CD14-positive monocyte (primary cell): ENCODE measurements at regions of chr1 and their contacts with region 1.

Region 1: DNA sequence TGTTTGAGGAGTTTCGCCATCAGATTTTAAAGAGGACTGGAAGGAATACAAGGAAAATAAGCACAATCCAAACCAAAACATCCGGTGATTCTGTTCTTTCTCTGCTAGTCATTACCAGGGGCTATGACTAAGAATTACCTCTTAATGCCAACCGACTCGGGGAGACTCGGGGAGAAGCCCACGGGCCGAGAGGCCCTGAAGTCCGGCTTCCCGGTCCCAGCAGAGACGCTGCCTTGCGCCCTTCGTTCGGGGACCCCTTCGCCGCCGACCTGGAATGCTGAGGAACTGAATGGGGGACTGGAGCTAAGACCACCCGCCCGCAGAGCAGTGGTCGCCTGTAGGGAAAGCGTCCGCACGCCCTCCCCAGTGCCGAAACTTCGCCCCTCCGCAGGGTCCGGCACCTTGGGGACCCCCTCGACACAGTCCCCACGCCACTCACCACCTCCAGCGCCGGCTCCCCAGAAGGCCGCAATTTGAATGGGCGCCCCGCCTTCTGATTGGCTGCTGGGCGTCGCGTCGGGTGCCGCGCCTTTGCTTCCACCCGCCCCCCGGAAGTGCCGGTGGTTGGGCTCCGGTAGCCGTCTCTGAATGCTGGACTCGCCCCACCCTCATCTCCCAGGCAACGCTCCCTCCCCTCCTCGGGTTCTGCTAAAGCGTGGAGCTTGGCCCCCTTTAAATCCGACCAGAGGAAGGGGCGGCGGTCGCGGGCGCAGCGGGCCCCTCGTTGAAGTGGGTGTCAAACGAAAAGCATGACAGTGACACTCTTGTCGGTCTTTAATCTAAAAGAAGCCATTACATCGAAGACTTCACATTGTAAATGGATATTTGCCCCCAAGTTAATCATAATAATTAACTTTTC is at the start of gene KIF14:
- DNase-seq: peak; percentile 90 to 93 (median 90)
- H3K4me3 ChIP-seq: peak within 1 kb of the TSS; percentile 81 to 97 (median 87)
- H3K4me3 Mint-ChIP-seq: peak within 1 kb of the TSS; percentile 87 to 93
- H3K27ac ChIP-seq: peak within 1 kb of the TSS; percentile 85 to 96
- H3K27ac Mint-ChIP-seq: peak within 1 kb of the TSS; percentile 95 to 98 (median 98)
- H3K4me1 ChIP-seq: peaks cover 19 to 21% of the 10 kb centered on the region in 2 donors
- H3K4me1 Mint-ChIP-seq: peaks cover 20% of the 10 kb centered on the region
- H3K27me3 ChIP-seq: no peaks in the 10 kb centered on the region
- H3K27me3 Mint-ChIP-seq: no peaks in the 10 kb centered on the region
- CTCF ChIP-seq: no peak
- polyA plus RNA-seq, gene KIF14: 0.03 to 0.18 (median 0.05) TPM

Region 2: DNA sequence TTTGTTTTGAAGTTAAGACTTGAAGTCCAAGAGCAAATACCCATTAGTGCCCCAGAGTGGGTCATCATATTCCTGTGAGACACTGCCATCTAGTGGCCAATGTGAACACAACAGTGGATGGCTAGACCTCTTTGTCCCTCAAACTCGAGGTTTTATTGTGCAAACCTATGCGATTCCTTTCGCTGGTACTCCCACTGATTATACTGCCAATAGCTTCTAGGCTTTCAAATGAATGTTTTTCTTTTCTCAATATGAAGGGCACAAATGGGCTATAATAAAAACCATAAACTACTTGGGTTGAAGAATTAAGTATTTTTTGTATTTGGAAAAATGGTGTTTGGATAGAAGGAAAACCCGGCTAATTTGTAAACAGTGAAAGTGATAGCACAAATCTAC is 110.3 kb before region 1 on chr1:
- intact Hi-C with region 1: no loop called
- DNase-seq: peak; percentile 58 to 78 (median 69)
- H3K4me3 ChIP-seq: no peak overlapping the region
- H3K4me3 Mint-ChIP-seq: no peak overlapping the region
- H3K27ac ChIP-seq: no peak overlapping the region
- H3K27ac Mint-ChIP-seq: no peak overlapping the region
- H3K4me1 ChIP-seq: no peaks in the 10 kb centered on the region
- H3K4me1 Mint-ChIP-seq: no peaks in the 10 kb centered on the region
- H3K27me3 ChIP-seq: no peaks in the 10 kb centered on the region
- H3K27me3 Mint-ChIP-seq: peaks cover 3 to 8% (median 6%) of the 10 kb centered on the region in 3 donors
- CTCF ChIP-seq: peak; percentile 96

Region 3: GRCh38 chr1:200639790-200640669 is 19.5 kb after region 1 on chr1:
- intact Hi-C with region 1: no loop called
- DNase-seq: peak; percentile 92 to 99 (median 98)
- H3K4me3 ChIP-seq: peak overlapping the region in 2 of 3 experiments; percentile 44 to 61
- H3K4me3 Mint-ChIP-seq: peak overlapping the region; percentile 1 to 72
- H3K27ac ChIP-seq: peak overlapping the region in 1 of 2 donors; percentile 87
- H3K27ac Mint-ChIP-seq: peak overlapping the region; percentile 91 to 98 (median 95)
- H3K4me1 ChIP-seq: peaks cover 37 to 42% of the 10 kb centered on the region in 2 donors
- H3K4me1 Mint-ChIP-seq: peaks cover 34% of the 10 kb centered on the region
- H3K27me3 ChIP-seq: no peaks in the 10 kb centered on the region
- H3K27me3 Mint-ChIP-seq: peaks cover 0 to 2% (median 2%) of the 10 kb centered on the region in 3 donors
- CTCF ChIP-seq: no peak

Region 4: DNA sequence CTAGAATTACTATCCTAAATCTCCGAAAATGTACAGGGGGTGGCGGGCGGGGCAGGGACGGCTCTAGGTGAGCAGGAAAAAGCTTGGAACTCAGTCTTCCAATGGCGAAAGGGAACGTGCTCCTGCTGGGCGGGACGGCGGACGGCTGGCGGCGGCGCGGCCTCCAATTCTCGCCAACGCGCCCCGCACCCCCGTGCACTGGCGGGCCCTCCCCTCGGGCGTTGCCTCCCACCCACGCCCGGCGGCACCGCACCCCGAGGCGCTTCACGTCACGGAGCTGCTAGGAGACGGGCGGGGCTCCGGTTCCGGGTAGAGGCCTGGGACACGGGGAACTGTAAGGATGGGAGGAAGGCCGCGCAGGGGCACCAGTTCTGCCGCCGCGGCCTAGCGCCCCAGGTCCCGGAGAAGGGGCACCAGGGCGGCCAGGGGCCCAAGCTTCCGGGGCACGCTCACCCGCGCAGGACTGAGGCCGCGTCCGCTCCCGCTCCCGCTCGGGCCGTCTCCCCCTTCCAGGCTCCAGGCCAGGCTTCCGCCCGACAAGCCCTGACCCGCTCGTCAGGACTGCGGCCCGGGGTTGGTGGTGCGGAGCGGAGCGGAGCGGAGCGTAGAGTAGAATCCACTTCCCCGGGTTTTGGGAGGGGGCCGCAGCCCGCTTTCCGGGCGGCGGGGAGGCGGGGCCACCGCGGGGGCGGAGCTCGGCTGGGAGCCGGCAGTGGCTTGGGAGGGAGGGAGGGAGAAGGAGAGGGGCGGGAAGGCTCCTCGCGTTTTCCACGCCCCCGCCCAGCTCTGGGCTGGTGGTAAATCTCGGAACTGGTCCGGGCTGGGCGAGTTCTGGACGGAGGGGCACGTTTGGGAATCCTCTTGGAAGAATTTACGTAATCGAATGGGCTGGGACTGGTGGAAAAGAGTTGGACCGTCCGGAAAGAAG is 49.1 kb after region 1 on chr1 and contains the start of gene DDX59:
- intact Hi-C with region 1: loop called (anchors 2 to 5 kb)
- DNase-seq: peak; percentile 86 to 93 (median 88)
- H3K4me3 ChIP-seq: peak within 1 kb of the TSS; percentile 67 to 90 (median 71)
- H3K4me3 Mint-ChIP-seq: peak within 1 kb of the TSS; percentile 98 to 99
- H3K27ac ChIP-seq: peak within 1 kb of the TSS; percentile 87 to 97
- H3K27ac Mint-ChIP-seq: peak within 1 kb of the TSS; percentile 98 to 100 (median 99)
- H3K4me1 ChIP-seq: peaks cover 13 to 19% of the 10 kb centered on the region in 2 donors
- H3K4me1 Mint-ChIP-seq: peaks cover 36% of the 10 kb centered on the region
- H3K27me3 ChIP-seq: no peaks in the 10 kb centered on the region
- H3K27me3 Mint-ChIP-seq: no peaks in the 10 kb centered on the region
- CTCF ChIP-seq: no peak
- polyA plus RNA-seq, gene DDX59: 14.3 to 18.6 (median 14.9) TPM

Region 5: GRCh38 chr1:200738740-200739498 is 118.4 kb after region 1 on chr1 and contains the start of gene CAMSAP2:
- intact Hi-C with region 1: loop called in 1 of 2 experiments (anchors 10 kb)
- DNase-seq: peak; percentile 51 to 73 (median 57)
- H3K4me3 ChIP-seq: peak within 1 kb of the TSS; percentile 69 to 91 (median 85)
- H3K4me3 Mint-ChIP-seq: peak within 1 kb of the TSS; percentile 99
- H3K27ac ChIP-seq: peak within 1 kb of the TSS in 1 of 2 donors; percentile 75
- H3K27ac Mint-ChIP-seq: peak within 1 kb of the TSS; percentile 80 to 93 (median 82)
- H3K4me1 ChIP-seq: peaks cover 17 to 23% of the 10 kb centered on the region in 2 donors
- H3K4me1 Mint-ChIP-seq: peaks cover 23% of the 10 kb centered on the region
- H3K27me3 ChIP-seq: peaks cover 43 to 52% of the 10 kb centered on the region in 2 donors
- H3K27me3 Mint-ChIP-seq: peaks cover 46 to 63% (median 53%) of the 10 kb centered on the region in 3 donors
- CTCF ChIP-seq: no peak
- polyA plus RNA-seq, gene CAMSAP2: 0.89 to 1.3 (median 0.90) TPM

Region 6: GRCh38 chr1:200802865-200803512 is 182.5 kb after region 1 on chr1:
- intact Hi-C with region 1: loop called (anchors 2 to 5 kb)
- DNase-seq: peak; percentile 53 to 74 (median 70)
- H3K4me3 ChIP-seq: no peak overlapping the region
- H3K4me3 Mint-ChIP-seq: no peak overlapping the region
- H3K27ac ChIP-seq: no peak overlapping the region
- H3K27ac Mint-ChIP-seq: peak overlapping the region in 1 of 7 donors; percentile 61
- H3K4me1 ChIP-seq: no peaks in the 10 kb centered on the region
- H3K4me1 Mint-ChIP-seq: peaks cover 2% of the 10 kb centered on the region
- H3K27me3 ChIP-seq: no peaks in the 10 kb centered on the region
- H3K27me3 Mint-ChIP-seq: peaks cover 0 to 2% (median 0%) of the 10 kb centered on the region in 3 donors
- CTCF ChIP-seq: peak; percentile 87